ENCODE measurements at regions of chr2 and their contacts with region 1.

Region 1: DNA sequence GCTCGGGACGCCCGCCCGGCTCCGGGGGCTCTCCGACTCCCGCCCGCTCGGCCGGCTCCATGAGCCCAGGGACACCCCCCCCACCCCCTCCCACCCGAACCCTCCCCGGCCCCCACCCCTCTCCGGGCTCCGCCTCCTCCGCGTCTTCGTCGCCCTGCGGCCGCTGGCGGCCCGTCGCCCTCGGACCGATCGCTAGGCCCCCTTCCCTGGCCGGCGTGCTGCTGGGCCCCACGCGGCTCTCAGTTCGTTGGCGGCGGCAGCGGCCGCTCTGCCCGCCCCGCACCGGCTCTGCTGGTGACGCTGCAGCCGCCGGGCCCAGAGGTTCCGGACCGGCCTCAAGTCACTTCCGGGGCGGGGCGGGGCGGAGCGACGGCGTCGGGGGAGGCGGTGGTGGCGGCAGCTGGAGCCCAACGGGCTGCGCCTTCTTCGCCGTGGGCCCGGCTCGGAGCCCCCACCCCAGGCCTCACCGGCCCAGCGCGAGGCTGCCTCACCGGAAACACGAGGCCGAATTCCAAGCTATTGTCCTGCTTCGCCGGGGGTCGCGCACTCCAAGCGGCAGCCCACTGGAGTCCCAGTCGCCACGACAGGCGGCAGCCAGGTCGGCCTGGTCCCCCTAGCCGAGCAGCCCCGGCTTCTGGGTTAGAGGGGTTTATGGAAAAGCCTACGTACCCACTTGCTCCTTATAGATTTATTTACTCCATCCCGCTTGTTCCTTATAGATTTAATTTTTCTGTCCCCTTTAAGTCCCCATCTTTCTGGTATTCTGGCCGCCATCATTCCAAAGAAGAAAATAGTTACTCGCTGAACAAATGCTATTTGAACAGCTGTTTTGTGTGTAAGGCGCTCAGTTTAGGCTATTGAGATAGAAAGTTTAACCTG is at the start of gene PSME4:
- DNase-seq: peak; percentile 97 to 98
- ATAC-seq: peak; percentile 86 to 95 (median 92)
- H3K4me3 ChIP-seq: peak within 1 kb of the TSS; percentile 81
- H3K27ac ChIP-seq: peak within 1 kb of the TSS; percentile 94
- H3K4me1 ChIP-seq: peaks cover 11% of the 10 kb centered on the region
- H3K27me3 ChIP-seq: no peaks in the 10 kb centered on the region
- CTCF ChIP-seq: no peak
- total RNA-seq, gene PSME4: 67.0 to 140 (median 116) TPM

Region 2: GRCh38 chr2:54048117-54048785 is 77.3 kb after region 1 on chr2:
- intact Hi-C with region 1: loop called in 1 of 2 experiments (anchors 10 kb)
- DNase-seq: no peak
- ATAC-seq: no peak
- H3K4me3 ChIP-seq: no peak overlapping the region
- H3K27ac ChIP-seq: no peak overlapping the region
- H3K4me1 ChIP-seq: peaks cover 10% of the 10 kb centered on the region
- H3K27me3 ChIP-seq: no peaks in the 10 kb centered on the region
- CTCF ChIP-seq: no peak

Region 3: DNA sequence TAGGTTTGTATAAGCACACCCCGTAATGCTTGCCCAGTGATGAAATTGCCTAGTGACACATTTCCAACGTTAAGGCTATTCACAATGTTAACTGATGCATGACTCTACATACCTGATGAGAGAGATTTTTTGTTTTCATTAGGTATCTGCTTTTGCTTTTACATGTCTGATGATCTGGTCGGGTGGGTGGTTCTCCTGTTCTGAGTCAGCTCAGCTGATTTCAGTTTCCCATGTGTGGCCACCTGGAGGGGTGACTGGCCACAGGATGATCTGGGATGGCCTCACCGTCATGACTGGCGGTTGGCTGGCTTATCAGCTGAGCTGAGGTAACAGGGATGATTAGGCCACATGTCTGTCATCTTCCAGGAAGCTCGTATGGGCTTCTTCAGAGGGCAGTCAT is 110.6 kb after region 1 on chr2:
- intact Hi-C with region 1: loop called in 1 of 2 experiments (anchors 10 kb)
- DNase-seq: no peak
- ATAC-seq: no peak
- H3K4me3 ChIP-seq: no peak overlapping the region
- H3K27ac ChIP-seq: no peak overlapping the region
- H3K4me1 ChIP-seq: peaks cover 10% of the 10 kb centered on the region
- H3K27me3 ChIP-seq: no peaks in the 10 kb centered on the region
- CTCF ChIP-seq: no peak